ENCODE measurements at regions of chr6 and their contacts with region 1.

Region 1: GRCh38 chr6:136643850-136644596 is 93.8 kb upstream of the MAP7 start:
- DNase-seq: peak; percentile 54
- H3K4me3 ChIP-seq: no peak overlapping the region
- H3K27ac ChIP-seq: no peak overlapping the region
- H3K27me3 ChIP-seq: no peaks in the 10 kb centered on the region
- CTCF ChIP-seq: peak; percentile 88

Region 2: DNA sequence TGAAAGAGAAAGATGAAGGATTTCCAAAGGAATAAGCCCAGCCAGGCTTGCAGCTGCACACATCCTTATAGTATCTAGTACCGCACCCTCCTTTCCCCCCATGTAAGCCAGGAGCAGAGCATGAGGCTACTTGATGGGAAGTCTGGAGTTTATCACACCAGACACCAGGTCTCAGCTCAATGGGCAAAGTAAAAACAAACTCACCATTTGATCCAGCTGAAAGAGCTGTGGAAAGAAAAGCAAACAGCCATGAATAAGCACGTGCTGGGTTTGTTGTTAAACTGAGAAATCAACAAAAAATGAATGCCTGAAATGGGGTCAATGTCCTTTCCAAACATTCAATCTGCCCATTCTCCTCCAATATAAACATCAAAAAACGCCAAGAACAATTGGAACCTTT is 43.2 kb before region 1 on chr6:
- CTCF ChIA-PET with region 1: interaction called, 10 read pairs
- POLR2A ChIA-PET with region 1: no interaction called
- DNase-seq: no peak
- H3K4me3 ChIP-seq: no peak overlapping the region
- H3K27ac ChIP-seq: no peak overlapping the region
- H3K27me3 ChIP-seq: no peaks in the 10 kb centered on the region
- CTCF ChIP-seq: no peak

Region 3: GRCh38 chr6:136633355-136633754 is 10.7 kb before region 1 on chr6:
- CTCF ChIA-PET with region 1: interaction called, 45 read pairs
- POLR2A ChIA-PET with region 1: no interaction called
- DNase-seq: no peak
- H3K4me3 ChIP-seq: no peak overlapping the region
- H3K27ac ChIP-seq: no peak overlapping the region
- H3K27me3 ChIP-seq: no peaks in the 10 kb centered on the region
- CTCF ChIP-seq: no peak

Region 4: GRCh38 chr6:136666041-136666440 is 22.0 kb after region 1 on chr6:
- CTCF ChIA-PET with region 1: interaction called, 14 read pairs
- POLR2A ChIA-PET with region 1: no interaction called
- DNase-seq: no peak
- H3K4me3 ChIP-seq: no peak overlapping the region
- H3K27ac ChIP-seq: no peak overlapping the region
- H3K27me3 ChIP-seq: no peaks in the 10 kb centered on the region
- CTCF ChIP-seq: no peak

Region 5: GRCh38 chr6:136753624-136754023 is 109.6 kb after region 1 on chr6:
- CTCF ChIA-PET with region 1: interaction called, 10 read pairs
- POLR2A ChIA-PET with region 1: no interaction called
- DNase-seq: no peak
- H3K4me3 ChIP-seq: no peak overlapping the region
- H3K27ac ChIP-seq: no peak overlapping the region
- H3K27me3 ChIP-seq: no peaks in the 10 kb centered on the region
- CTCF ChIP-seq: no peak

Region 6: GRCh38 chr6:136798031-136798430 is 154.0 kb after region 1 on chr6:
- CTCF ChIA-PET with region 1: interaction called, 221 read pairs
- POLR2A ChIA-PET with region 1: interaction called, 22 read pairs
- DNase-seq: no peak
- H3K4me3 ChIP-seq: no peak overlapping the region
- H3K27ac ChIP-seq: no peak overlapping the region
- H3K27me3 ChIP-seq: no peaks in the 10 kb centered on the region
- CTCF ChIP-seq: no peak